Posterior vena cava (tissue), 2 donors: ENCODE measurements at regions of chr14 and their contacts with region 1.

Region 1: GRCh38 chr14:100374876-100375265 is 51.7 kb downstream of the SLC25A47 start:
- DNase-seq: no peak

Region 2: DNA sequence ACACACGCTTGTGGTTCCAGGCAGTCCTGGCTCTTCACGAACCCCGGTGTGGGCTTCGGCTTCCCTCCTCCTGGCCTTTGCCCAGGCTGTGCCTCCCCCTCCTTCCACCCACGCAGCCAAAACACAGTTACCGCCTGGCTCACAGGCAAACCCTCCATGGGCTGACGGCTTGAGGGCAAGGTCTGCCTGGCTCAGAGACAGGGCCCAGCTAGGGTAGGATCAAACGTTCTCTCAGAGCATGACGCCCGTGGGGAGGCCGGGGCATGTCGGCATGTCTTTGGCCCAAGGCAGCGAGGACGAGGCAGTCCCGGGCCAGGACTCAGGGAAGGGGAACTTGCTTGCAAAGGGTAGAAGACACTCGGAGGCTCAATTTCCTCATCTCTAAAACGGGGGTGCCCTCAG is 49.6 kb before region 1 on chr14:
- intact Hi-C with region 1: loop called in 1 of 2 experiments (anchors 5 kb)
- DNase-seq: no peak

Region 3: GRCh38 chr14:100341301-100342031 is 33.4 kb before region 1 on chr14:
- intact Hi-C with region 1: no loop called
- DNase-seq: no peak

Region 4: GRCh38 chr14:100384819-100385813 is 10.2 kb after region 1 on chr14:
- intact Hi-C with region 1: no loop called
- DNase-seq: no peak